Transverse colon (tissue), 4 donors: ENCODE measurements at regions of chr19 and their contacts with region 1.

Region 1: DNA sequence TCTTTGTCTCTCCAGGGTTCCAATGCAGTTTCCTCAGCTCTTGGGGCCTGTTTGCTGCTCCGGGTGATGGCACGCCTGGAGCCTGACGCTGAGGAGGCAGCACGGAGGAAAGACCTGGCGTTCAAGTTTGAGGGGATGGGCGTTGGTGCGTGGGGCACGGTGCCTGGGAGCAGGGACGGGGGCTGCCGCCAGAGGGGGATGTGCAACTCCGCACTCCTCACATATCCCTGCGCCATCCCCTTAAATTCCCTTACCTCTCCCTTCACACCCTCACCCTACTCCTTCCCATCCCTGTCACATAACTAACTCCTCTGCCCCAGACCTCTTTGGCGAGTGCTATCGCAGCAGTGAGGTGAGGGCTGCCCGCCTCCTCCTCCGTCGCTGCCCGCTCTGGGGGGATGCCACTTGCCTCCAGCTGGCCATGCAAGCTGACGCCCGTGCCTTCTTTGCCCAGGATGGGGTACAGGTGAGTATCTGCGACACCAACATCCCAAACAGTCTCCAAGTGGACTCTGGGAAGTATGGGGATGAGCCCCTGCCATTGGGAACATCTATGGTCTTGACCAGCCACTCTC is 31.1 kb downstream of the TRPM4 start:
- DNase-seq: no peak
- H3K4me3 ChIP-seq: no peak overlapping the region
- H3K27ac ChIP-seq: no peak overlapping the region
- H3K4me1 ChIP-seq: peaks cover 0 to 28% (median 5%) of the 10 kb centered on the region in 4 donors
- H3K27me3 ChIP-seq: no peaks in the 10 kb centered on the region
- CTCF ChIP-seq: no peak
- EP300 ChIP-seq: no peak
- POLR2A ChIP-seq: no peak

Region 2: DNA sequence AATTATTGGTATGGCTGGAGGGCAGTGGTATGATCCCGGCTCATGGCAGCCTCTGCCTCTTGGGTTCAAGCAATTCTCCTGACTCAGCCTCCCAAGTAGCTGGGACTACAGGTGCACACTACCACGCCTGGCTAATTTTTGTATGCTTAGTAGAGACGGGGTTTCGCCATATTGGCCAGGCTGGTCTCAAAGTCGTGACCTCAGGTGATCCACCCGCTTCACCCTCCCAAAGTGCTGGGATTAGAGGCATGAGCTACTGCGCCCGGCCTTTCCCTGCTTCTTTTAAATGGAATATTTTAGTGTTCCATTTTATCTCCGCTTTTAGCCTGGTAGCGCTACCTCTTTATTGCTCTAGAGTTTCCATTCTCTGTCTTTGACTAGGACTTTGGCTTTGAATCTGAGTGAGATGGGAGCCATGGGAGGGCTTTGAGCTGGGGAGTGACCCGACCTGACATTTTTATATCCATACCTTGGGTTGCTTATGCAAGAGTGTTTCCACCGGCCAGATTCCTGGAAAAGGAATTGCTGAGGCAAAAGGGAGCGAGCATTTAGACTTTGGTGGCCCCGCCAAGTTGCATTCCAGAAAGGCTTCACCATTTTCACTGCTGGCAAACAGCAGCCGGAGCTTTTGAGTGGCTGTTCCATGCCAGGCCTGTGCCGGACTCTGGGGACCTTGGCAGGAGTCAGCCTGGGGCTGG is 1556.9 kb before region 1 on chr19:
- in situ Hi-C with region 1: no loop called
- intact Hi-C with region 1: no loop called
- DNase-seq: no peak
- H3K4me3 ChIP-seq: no peak overlapping the region
- H3K27ac ChIP-seq: peak overlapping the region; percentile 66 to 86 (median 72)
- H3K4me1 ChIP-seq: peaks cover 15 to 71% (median 23%) of the 10 kb centered on the region in 4 donors
- H3K27me3 ChIP-seq: no peaks in the 10 kb centered on the region
- CTCF ChIP-seq: no peak
- EP300 ChIP-seq: no peak
- POLR2A ChIP-seq: no peak

Region 3: GRCh38 chr19:49056010-49056901 is 132.5 kb before region 1 on chr19:
- in situ Hi-C with region 1: no loop called
- intact Hi-C with region 1: no loop called
- DNase-seq: peak; percentile 65
- H3K4me3 ChIP-seq: peak overlapping the region; percentile 13 to 52 (median 38)
- H3K27ac ChIP-seq: no peak overlapping the region
- H3K4me1 ChIP-seq: peaks cover 9 to 25% (median 18%) of the 10 kb centered on the region in 4 donors
- H3K27me3 ChIP-seq: peaks cover 50% of the 10 kb centered on the region
- CTCF ChIP-seq: peak in 4 of 5 experiments; percentile 14 to 40 (median 24)
- EP300 ChIP-seq: no peak
- POLR2A ChIP-seq: no peak

Region 4: GRCh38 chr19:49165865-49166301 is 22.8 kb before region 1 on chr19:
- in situ Hi-C with region 1: no loop called
- intact Hi-C with region 1: loop called (anchors 1 kb)
- DNase-seq: peak; percentile 22
- H3K4me3 ChIP-seq: peak overlapping the region in 3 of 4 donors; percentile 9 to 39 (median 30)
- H3K27ac ChIP-seq: peak overlapping the region; percentile 81 to 89 (median 87)
- H3K4me1 ChIP-seq: peaks cover 14 to 76% (median 37%) of the 10 kb centered on the region in 4 donors
- H3K27me3 ChIP-seq: no peaks in the 10 kb centered on the region
- CTCF ChIP-seq: peak in 1 of 5 experiments; percentile 28
- EP300 ChIP-seq: no peak
- POLR2A ChIP-seq: no peak

Region 5: GRCh38 chr19:49374665-49375434 is 186.1 kb after region 1 on chr19:
- in situ Hi-C with region 1: no loop called
- intact Hi-C with region 1: no loop called
- DNase-seq: no peak
- H3K4me3 ChIP-seq: no peak overlapping the region
- H3K27ac ChIP-seq: no peak overlapping the region
- H3K4me1 ChIP-seq: no peaks in the 10 kb centered on the region
- H3K27me3 ChIP-seq: no peaks in the 10 kb centered on the region
- CTCF ChIP-seq: no peak
- EP300 ChIP-seq: no peak
- POLR2A ChIP-seq: no peak